Activated T-helper 1 cell treated with anti-CD3 and anti-CD28 coated beads, Interleukin-12 subunit alpha, Interleukin-12 subunit beta, Interleukin-2, Interleukin-4 antibody, amounts not matched to agents 30 ng/mL and 10 ng/mL and 1 ng/mL, durations not matched to agents 14 hours and 24 hours and 36 hours (primary cell): ENCODE measurements at regions of chr4 and their contacts with region 1.

Region 1: DNA sequence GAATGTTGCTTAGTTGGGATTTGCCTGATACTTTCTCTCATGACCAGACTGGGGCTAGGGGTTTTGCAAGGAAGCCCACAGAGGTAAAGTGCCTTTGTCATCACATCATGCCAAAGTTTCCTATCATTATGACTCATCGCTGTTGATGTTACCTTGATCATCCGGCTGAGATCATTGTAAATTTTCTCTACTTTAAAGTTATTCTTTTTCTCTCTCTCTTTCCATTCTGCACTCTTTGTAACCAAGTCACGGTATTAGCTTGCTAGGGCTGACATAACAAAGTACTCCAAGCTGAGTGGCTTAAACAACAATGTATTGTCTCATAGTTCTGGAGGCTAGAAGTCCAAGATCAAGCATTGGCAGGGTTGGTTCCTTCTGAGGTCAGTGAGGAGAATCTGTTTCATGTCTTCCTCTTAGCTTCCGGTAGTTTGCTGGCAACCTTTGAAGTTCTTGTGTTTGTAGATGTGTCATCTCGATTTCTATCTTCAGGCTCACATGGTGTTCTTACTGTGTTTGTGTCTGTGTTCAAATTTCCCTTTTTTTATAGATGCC is 113.0 kb downstream of the DTHD1 start:
- DNase-seq: peak; percentile 56
- H3K4me3 Mint-ChIP-seq: peak overlapping the region; percentile 71
- H3K27ac Mint-ChIP-seq: peak overlapping the region; percentile 97
- H3K4me1 Mint-ChIP-seq: peaks cover 34% of the 10 kb centered on the region
- H3K27me3 Mint-ChIP-seq: peaks cover 5% of the 10 kb centered on the region

Region 2: GRCh38 chr4:35970366-35970960 is 424.0 kb before region 1 on chr4:
- intact Hi-C with region 1: loop called (anchors 2 kb)
- DNase-seq: no peak
- H3K4me3 Mint-ChIP-seq: no peak overlapping the region
- H3K27ac Mint-ChIP-seq: no peak overlapping the region
- H3K4me1 Mint-ChIP-seq: peaks cover 1% of the 10 kb centered on the region
- H3K27me3 Mint-ChIP-seq: peaks cover 2% of the 10 kb centered on the region

Region 3: DNA sequence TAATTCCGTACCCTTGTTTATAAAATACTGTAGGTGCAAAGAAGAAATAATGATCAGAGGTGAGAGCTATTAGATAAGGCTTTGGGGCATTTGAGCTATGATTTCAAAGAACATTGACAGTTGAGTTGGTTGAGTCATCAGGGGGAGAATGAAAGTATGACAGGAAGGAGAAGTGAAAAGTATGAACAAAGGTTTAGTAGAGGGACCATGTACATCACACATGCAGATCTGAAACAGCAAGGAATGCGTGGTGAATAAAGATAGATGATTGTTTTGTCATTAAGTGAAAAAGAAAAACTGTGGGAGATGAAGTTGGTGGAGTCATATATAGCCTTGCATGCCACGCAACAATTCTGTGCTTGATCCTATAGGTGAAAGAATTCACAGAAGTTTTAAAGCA is 313.2 kb before region 1 on chr4:
- intact Hi-C with region 1: loop called (anchors 5 kb)
- DNase-seq: no peak
- H3K4me3 Mint-ChIP-seq: no peak overlapping the region
- H3K27ac Mint-ChIP-seq: no peak overlapping the region
- H3K4me1 Mint-ChIP-seq: peaks cover 3% of the 10 kb centered on the region
- H3K27me3 Mint-ChIP-seq: no peaks in the 10 kb centered on the region

Region 4: GRCh38 chr4:36123906-36124305 is 270.5 kb before region 1 on chr4:
- intact Hi-C with region 1: no loop called
- DNase-seq: no peak
- H3K4me3 Mint-ChIP-seq: no peak overlapping the region
- H3K27ac Mint-ChIP-seq: no peak overlapping the region
- H3K4me1 Mint-ChIP-seq: peaks cover 2% of the 10 kb centered on the region
- H3K27me3 Mint-ChIP-seq: no peaks in the 10 kb centered on the region

Region 5: GRCh38 chr4:36208893-36209473 is 185.4 kb before region 1 on chr4:
- intact Hi-C with region 1: loop called (anchors 1 kb)
- DNase-seq: peak; percentile 10
- H3K4me3 Mint-ChIP-seq: peak overlapping the region; percentile 56
- H3K27ac Mint-ChIP-seq: peak overlapping the region; percentile 70
- H3K4me1 Mint-ChIP-seq: peaks cover 64% of the 10 kb centered on the region
- H3K27me3 Mint-ChIP-seq: no peaks in the 10 kb centered on the region

Region 6: DNA sequence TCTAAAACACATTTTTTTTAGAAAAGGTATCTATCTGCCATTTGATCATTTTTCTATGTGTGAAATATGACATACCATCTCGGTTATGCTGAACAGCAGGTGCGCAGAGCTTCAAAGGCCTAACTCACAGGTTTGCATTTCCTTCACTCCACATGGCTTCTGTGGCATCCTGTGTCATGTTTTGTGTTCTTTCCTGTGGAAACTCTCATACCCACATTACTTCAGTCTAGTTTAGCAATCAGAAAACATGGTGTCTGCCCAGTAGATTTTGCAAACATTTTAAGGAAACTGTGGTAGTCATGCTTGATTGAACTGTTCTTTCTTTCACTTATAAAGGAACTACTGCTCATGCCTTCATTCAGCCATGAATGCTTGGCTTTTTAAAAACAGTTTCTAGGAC is 138.9 kb before region 1 on chr4:
- intact Hi-C with region 1: loop called (anchors 1 kb)
- DNase-seq: peak; percentile 72
- H3K4me3 Mint-ChIP-seq: peak overlapping the region; percentile 81
- H3K27ac Mint-ChIP-seq: peak overlapping the region; percentile 97
- H3K4me1 Mint-ChIP-seq: peaks cover 47% of the 10 kb centered on the region
- H3K27me3 Mint-ChIP-seq: no peaks in the 10 kb centered on the region

Region 7: GRCh38 chr4:36278789-36279188 is 115.6 kb before region 1 on chr4:
- intact Hi-C with region 1: loop called (anchors 1 kb)
- DNase-seq: no peak
- H3K4me3 Mint-ChIP-seq: peak overlapping the region; percentile 72
- H3K27ac Mint-ChIP-seq: peak overlapping the region; percentile 82
- H3K4me1 Mint-ChIP-seq: peaks cover 75% of the 10 kb centered on the region
- H3K27me3 Mint-ChIP-seq: no peaks in the 10 kb centered on the region